ENCODE measurements at regions of chr2 and their contacts with region 1.

Region 1: GRCh38 chr2:3303583-3304406 is 73.8 kb downstream of the EIPR1 start:
- DNase-seq: peak; percentile 83 to 94 (median 91)
- H3K4me3 ChIP-seq: peak overlapping the region in 58 of 59 donors; percentile 30 to 66 (median 52)
- H3K27ac ChIP-seq: peak overlapping the region in 35 of 59 donors; percentile 5 to 84 (median 53)
- H3K27me3 ChIP-seq: no peaks in the 10 kb centered on the region
- CTCF ChIP-seq: peak; percentile 97 to 100 (median 99)

Region 2: GRCh38 chr2:1854729-1855547 is 1448.9 kb before region 1 on chr2:
- intact Hi-C with region 1: loop called in 1 of 2 experiments (anchors 5 kb)
- DNase-seq: peak in 9 of 10 donors; percentile 66 to 83 (median 74)
- H3K4me3 ChIP-seq: peak overlapping the region; percentile 2 to 70 (median 47)
- H3K27ac ChIP-seq: peak overlapping the region in 58 of 59 donors; percentile 6 to 90 (median 74)
- H3K27me3 ChIP-seq: peaks cover 0 to 15% (median 0%) of the 10 kb centered on the region in 45 donors
- CTCF ChIP-seq: peak in 55 of 56 donors; percentile 35 to 85 (median 71)

Region 3: GRCh38 chr2:3001615-3002560 is 301.9 kb before region 1 on chr2:
- intact Hi-C with region 1: loop called in 1 of 2 experiments (anchors 2 kb)
- DNase-seq: no peak
- H3K4me3 ChIP-seq: no peak overlapping the region
- H3K27ac ChIP-seq: no peak overlapping the region
- H3K27me3 ChIP-seq: peaks cover 0 to 7% (median 0%) of the 10 kb centered on the region in 45 donors
- CTCF ChIP-seq: peak in 47 of 56 donors; percentile 8 to 67 (median 37)

Region 4: DNA sequence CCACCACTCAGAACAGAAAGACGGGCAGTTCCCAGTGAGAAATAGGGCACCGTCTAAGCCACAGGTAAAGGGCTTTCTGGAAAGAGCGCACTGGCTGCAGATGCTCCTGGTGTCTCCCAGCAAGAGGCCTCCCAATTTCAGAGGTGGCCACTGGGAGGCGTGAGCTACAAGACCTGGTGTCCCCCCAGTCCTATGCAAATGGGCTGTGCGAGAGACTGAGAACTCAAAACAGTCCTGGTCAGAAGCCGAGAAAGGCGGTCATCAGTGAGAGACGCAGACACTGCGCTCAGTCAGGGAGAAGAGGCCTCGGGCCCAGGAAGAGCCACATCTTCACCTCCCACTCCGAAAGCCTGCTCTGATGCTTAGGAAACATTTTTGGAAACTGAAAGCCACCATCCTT is 105.7 kb before region 1 on chr2:
- intact Hi-C with region 1: loop called (anchors 5 kb)
- DNase-seq: peak in 5 of 10 donors; percentile 46 to 69 (median 55)
- H3K4me3 ChIP-seq: peak overlapping the region in 3 of 59 donors; percentile 16 to 26 (median 26)
- H3K27ac ChIP-seq: peak overlapping the region in 25 of 59 donors; percentile 12 to 67 (median 36)
- H3K27me3 ChIP-seq: no peaks in the 10 kb centered on the region
- CTCF ChIP-seq: peak in 45 of 56 donors; percentile 9 to 58 (median 40)

Region 5: DNA sequence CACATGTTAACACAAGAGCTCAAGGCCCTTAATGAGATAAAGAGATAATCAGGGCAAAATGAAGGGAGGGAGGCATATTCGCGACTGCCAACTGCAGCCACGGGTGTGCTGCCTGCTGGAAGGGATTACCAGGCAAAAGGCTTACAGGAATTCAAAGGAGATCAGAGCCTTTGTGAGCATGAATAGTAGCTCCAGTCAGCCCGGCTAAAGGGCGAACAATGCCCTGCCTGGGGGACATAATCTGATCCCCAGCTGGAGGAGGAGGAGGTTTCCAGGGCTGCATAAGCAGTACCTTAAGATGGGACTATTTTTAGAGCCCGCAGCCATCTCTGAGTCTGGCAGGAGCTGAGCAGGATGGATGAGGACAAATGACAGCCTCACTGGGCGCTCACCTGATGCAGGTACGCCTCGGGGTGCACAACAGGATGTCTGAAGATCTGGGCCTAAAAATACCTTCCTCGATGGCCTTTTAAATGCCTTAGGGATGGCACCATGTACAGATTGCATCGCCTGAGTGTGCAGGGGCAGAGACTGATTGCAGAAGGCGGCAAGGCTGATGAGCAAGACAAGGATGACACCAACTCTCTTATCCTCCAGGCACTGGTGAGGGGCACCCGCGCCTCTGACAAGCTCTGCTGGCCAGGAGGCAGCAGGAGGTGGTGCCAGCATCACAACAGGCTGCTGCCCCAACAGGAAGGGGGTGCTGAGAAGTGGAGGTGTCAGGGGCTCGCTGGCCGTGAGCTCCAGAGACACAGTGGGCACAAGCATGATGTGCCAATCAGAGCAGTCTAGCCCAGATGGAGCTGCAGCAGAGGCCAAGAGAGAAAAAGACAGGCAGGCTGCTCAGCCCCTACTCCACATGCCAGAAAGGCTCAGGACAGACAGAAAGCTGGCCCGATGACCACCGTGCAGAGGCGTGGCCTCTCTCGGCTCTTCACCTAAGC is 37.5 kb before region 1 on chr2:
- intact Hi-C with region 1: loop called in 1 of 2 experiments (anchors 5 kb)
- DNase-seq: peak in 2 of 10 donors; percentile 76 to 77
- H3K4me3 ChIP-seq: peak overlapping the region in 1 of 59 donors; percentile 11
- H3K27ac ChIP-seq: peak overlapping the region in 51 of 59 donors; percentile 12 to 84 (median 64)
- H3K27me3 ChIP-seq: no peaks in the 10 kb centered on the region
- CTCF ChIP-seq: no peak

Region 6: DNA sequence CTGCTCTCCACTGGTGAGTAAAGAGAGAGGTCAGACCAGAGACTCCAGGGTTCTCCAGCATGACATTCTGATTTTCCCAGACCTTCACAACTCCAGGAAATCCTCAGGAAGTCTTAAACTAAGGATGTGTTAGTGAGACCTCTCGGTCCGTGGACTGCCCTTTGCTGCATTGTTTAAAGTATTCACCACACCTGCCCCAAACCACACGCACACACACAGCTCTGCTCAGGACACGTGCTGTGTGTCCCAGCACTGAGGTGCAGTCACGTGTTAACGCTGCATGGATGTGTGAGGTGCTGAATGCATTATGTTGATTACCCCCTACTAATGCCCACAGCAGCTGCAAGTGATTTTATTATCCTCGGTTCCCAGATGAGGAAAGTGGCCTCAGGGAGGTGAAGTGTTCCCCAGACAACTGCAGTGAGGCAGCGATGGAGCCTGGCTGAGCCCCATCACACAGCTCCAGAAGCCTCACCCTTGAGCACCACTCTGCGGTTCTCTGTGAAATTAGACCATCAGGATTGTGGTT is 144.1 kb after region 1 on chr2:
- intact Hi-C with region 1: no loop called
- DNase-seq: no peak
- H3K4me3 ChIP-seq: no peak overlapping the region
- H3K27ac ChIP-seq: peak overlapping the region in 20 of 59 donors; percentile 1 to 58 (median 32)
- H3K27me3 ChIP-seq: no peaks in the 10 kb centered on the region
- CTCF ChIP-seq: no peak